ENCODE measurements at regions of chr19 and their contacts with region 1.

Region 1: DNA sequence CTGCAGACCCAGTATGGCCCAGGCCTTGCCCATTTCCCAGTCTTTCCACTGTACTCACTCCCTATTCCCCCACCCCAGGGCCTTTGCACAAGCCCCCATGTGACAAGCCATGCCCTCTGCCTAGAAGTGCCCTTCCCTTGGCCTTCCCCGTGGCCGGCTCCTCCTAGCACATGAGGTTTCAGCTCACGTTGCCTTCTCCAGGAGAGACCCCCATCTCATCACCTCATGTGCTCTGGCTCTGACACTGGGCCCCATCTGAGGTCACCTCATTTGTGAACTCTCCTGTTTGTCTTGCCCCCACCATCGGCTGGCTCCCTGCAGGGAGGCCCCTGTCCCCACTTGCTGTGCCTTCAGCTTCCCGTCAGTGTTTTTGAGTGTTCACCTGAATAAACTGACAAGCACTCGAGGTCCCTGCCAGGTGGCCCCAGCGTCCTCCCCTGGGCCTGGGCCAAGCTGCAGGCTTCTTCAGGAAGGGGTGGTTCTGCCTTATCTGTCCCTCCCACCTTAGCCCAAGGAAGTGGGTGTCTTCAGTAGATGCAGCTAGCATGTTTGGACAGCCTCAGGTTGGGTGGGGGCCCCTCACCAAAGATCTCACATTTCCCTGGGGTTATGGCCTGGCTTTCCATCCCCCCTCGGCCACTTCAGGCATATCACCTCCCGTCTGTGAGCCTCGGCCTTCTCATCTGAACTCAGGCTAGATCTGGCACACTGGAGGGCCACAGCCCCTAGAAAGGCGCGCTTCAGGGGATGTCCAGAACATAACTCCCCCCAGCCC is 3.8 kb upstream of the SLC25A42 start:
- DNase-seq: no peak
- H3K4me3 ChIP-seq: no peak overlapping the region
- H3K27ac ChIP-seq: peak overlapping the region in 4 of 5 donors; percentile 16 to 75 (median 48)
- H3K4me1 ChIP-seq: peaks cover 17 to 28% of the 10 kb centered on the region in 2 donors
- H3K27me3 ChIP-seq: no peaks in the 10 kb centered on the region
- CTCF ChIP-seq: no peak
- POLR2A ChIP-seq: no peak

Region 2: DNA sequence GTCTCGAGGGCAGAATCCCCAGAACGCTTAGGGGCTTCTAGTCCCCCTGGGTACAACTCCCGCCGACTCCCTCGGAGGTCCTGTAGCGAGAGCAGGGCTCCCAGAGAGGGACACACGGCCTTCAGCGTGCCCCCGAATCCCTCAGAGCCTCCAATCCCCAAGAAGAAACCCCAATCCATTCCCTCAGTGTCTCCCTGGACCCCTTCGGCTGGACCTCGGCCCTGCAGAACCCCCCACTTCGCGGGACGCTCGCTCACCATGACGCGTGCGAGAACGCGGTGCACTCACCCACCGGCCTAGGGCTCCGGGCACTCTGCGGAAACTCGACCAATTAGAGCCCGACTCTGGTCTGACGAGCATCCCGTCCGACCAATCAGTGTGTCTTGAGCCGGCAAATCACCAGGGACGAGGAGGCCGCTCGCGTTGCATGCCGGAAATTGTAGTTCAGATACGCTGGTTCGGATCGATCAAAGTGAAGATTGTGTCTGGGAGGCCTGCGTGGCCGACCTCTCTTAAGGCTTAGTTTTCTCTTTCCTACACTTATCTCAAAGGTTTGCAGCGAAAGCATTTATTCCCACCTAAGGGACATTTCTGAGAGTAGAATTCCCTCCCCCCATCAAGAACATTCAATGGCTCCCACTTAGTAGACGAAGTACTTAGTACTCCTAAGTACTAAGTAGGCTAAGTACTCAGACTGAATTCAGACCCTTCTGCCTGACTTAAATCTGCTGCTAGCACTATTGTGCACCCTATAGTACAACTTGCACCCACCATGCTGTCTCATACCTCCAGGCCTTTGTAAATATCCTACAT is 78.4 kb after region 1 on chr19 and contains the start of gene TMEM161A:
- intact Hi-C with region 1: loop called (anchors 5 to 10 kb)
- DNase-seq: peak; percentile 98 to 100 (median 99)
- H3K4me3 ChIP-seq: peak within 1 kb of the TSS; percentile 39 to 70 (median 64)
- H3K27ac ChIP-seq: peak within 1 kb of the TSS in 3 of 5 donors; percentile 53 to 68 (median 55)
- H3K4me1 ChIP-seq: peaks cover 6 to 9% of the 10 kb centered on the region in 2 donors
- H3K27me3 ChIP-seq: no peaks in the 10 kb centered on the region
- CTCF ChIP-seq: no peak
- POLR2A ChIP-seq: peak; percentile 33 to 79
- total RNA-seq, gene TMEM161A: 27.0 to 83.8 (median 37.7) TPM

Measured in adrenal gland (tissue), 19 donors.